ENCODE measurements at regions of chr6 and their contacts with region 1.

Region 1: DNA sequence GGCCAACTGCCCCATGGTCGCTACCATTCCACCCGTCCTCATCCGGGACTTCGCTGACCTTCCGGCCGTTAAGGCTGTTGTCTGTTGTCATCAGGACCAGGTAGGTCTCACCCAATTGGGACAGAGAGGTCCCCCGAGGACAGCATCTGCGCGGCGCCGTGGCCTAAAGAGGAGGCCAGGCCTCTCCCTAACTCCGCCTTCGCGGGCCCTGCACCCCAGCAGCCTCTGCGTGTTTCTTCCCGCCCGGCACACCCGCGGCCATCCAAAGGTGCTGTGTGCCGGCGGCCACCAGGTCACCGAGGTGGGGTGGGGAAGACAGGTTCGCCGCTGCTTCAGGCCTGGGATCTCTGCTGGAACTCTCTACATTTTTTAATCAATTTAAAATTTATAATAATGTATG is 9.0 kb downstream of the OR2W1 start:
- DNase-seq: no peak
- H3K4me3 ChIP-seq: no peak overlapping the region
- CTCF ChIP-seq: no peak
- POLR2A ChIP-seq: no peak

Region 2: GRCh38 chr6:28322661-28323060 is 713.3 kb before region 1 on chr6:
- intact Hi-C with region 1: no loop called
- DNase-seq: no peak
- H3K4me3 ChIP-seq: no peak overlapping the region
- CTCF ChIP-seq: no peak
- POLR2A ChIP-seq: no peak

Region 3: DNA sequence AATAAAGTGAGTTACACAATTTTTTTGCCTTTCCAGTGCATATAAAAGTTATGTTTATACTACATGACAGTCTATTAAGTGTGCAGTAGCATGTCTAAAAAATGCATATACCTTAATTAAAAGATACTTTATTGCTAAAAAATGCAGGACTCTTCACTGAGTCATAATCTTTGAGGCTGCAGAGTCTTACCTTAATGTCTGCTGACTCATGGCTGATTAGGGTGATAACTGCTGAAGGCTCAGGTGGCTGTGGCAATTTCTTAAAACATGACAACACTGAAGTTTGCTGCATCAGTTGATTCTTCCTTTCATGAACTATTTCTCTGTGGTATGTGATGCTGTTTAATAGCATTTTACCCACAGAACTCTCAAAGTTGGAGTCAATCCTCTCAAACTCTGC is 611.8 kb before region 1 on chr6:
- intact Hi-C with region 1: loop called (anchors 5 kb)
- DNase-seq: no peak
- H3K4me3 ChIP-seq: no peak overlapping the region
- CTCF ChIP-seq: no peak
- POLR2A ChIP-seq: no peak